OCI-LY7 (cell line): ENCODE measurements at regions of chr1 and their contacts with region 1.

Region 1: DNA sequence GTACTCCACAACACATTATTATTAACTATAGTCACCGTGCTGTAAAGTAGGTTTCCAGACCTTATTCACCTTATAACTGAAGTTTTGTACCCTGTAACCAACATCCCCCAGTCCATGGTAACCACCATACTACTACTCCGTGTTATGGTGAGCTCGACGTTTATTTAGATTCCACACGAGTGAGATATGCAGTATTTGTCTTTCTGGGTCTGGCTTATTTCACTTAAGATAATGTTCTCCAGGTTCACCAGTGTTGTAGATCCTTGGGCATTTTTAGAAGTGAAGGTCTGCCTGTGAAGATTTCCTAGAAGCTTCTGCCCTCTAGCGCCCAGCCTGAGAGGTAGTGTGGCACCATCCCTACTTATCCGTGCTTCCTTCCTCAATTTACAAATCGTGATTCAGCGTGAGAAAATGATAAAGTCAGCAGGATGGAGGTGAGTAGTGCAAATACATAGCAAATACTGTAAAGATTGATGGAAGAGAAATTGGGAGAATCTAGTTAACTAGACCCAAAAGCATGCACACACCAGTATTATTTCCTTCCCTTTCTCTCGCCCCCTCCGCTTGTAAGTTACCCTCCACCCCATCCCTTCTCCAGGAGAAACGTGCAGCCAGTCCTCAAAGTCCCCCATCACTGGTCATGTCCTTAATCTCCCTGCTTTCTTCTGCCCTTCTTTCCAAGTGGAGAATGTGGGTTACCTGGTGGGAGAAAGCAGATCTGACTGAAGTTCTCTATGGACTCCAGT is 36.0 kb upstream of the DISC1 start:
- DNase-seq: peak; percentile 68
- H3K4me3 ChIP-seq: no peak overlapping the region
- H3K27ac ChIP-seq: no peak overlapping the region
- H3K4me1 ChIP-seq: no peaks in the 10 kb centered on the region
- CTCF ChIP-seq: peak; percentile 94

Region 2: DNA sequence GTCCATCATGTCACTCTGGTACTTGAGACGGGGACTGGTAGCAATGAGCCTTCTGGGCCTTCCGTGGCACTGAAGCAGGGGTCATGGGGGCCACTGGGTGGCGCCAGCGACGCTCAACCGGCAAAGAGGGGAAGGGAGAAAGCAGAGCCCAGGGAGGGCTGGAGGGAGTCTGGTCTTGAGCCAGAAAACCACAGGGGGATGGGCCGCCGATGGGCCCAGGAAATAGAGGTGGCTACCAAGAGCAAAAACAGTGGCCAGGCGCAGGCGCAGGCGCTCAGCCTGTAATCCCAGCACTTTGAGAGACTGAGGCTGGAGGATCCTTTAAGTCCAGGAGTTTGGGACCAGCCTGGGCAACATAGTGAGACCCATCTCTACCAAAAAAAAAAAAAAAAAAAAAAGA is 274.7 kb before region 1 on chr1:
- CTCF ChIA-PET with region 1: no interaction called
- POLR2A ChIA-PET with region 1: interaction called, 4 read pairs
- intact Hi-C with region 1: loop called (anchors 5 kb)
- DNase-seq: peak; percentile 50
- H3K4me3 ChIP-seq: no peak overlapping the region
- H3K27ac ChIP-seq: no peak overlapping the region
- H3K4me1 ChIP-seq: no peaks in the 10 kb centered on the region
- CTCF ChIP-seq: peak; percentile 79

Region 3: DNA sequence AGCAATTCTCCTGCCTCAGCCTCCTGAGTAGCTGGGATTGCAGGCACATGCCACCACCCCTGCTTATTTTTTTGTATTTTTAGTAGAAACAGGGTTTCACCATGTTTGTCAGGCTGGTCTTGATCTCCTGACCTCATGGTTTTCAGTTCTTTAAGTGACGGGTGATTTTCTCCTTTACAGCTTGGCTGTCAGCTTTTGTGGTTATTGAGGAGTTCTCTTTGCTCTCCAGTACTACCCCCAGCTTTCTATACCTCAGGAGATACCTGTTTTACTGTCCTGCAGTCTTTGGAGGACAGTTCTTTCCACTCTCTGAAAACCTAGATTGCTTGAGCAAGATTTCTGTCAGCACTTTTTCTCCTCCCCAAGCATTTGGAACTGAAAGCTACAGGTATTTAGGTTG is 122.6 kb before region 1 on chr1:
- CTCF ChIA-PET with region 1: no interaction called
- POLR2A ChIA-PET with region 1: no interaction called
- intact Hi-C with region 1: no loop called
- DNase-seq: no peak
- H3K4me3 ChIP-seq: no peak overlapping the region
- H3K27ac ChIP-seq: no peak overlapping the region
- H3K4me1 ChIP-seq: no peaks in the 10 kb centered on the region
- CTCF ChIP-seq: no peak

Region 4: DNA sequence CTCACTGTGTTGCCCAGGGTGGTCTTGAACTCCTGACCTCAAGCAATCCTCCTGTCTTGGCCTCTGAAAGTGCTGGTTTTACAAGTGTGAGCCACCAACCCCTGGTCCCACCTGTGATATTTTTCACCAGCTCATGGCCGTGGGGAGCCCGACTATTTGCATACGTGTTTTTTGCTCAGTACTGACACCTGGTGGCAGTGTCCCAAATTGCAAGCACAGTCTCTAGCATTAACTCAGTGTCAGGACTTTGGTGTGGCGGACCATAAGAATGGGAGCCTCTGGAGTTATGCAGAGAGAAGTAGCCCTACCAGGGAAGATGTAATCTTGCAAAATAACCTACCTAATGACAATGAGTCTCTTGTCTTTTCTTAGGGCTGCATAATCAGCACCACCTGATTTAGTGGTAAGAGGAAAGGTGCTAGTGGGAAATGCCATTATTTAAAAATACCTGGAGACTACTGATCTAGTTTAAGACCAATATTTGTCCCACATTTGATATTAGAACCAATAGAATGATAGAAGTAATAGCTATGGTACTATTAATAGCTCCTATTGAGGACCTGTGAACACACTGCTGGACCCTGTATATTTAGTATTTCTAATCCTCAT is 341.3 kb after region 1 on chr1:
- CTCF ChIA-PET with region 1: no interaction called
- POLR2A ChIA-PET with region 1: no interaction called
- intact Hi-C with region 1: no loop called
- DNase-seq: peak; percentile 19
- H3K4me3 ChIP-seq: no peak overlapping the region
- H3K27ac ChIP-seq: no peak overlapping the region
- H3K4me1 ChIP-seq: no peaks in the 10 kb centered on the region
- CTCF ChIP-seq: peak; percentile 83